ENCODE measurements at regions of chr18 and their contacts with region 1.

Region 1: DNA sequence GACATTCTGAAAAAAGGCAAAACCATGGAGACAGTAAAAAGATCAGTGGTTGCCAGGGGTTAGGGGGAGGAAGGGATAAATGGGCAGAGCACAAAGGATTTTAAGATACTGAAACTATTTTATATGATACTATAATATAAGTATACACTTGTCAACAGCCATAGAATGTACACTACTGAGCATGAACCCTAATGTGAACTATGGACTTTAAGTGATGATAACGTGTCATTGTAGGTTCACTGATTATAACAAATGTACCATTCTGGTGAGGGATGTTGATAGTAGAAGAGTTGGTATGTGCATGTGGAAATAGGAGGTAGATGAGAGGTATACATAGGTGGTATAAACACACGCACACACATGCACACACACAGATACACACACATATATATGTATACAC is 241.6 kb downstream of the NOL4 start:
- DNase-seq: no peak
- H3K4me3 ChIP-seq: no peak overlapping the region
- H3K27ac ChIP-seq: no peak overlapping the region
- H3K4me1 ChIP-seq: no peaks in the 10 kb centered on the region
- H3K27me3 ChIP-seq: no peaks in the 10 kb centered on the region
- CTCF ChIP-seq: no peak
- EP300 ChIP-seq: no peak
- POLR2A ChIP-seq: no peak

Region 2: DNA sequence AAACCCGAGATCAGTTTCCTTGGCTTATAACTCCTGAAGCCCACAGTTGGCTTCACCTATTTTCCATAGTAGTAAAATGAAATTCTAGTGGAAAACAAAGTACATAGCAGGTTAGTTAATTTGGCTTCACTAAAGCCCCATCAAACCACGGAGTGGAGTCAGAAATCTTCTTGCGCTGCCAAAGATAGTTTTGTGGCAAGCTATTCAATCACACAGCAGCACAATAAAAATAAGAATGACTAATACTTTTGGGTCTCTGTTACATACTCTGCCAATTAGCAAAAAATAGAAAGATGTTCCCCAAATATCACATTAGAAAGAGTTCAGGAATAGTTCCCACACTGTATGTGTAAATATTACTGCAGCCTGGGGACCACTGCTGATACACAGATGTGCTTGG is 416.8 kb after region 1 on chr18:
- intact Hi-C with region 1: loop called in 1 of 4 experiments (anchors 5 kb)
- DNase-seq: no peak
- H3K4me3 ChIP-seq: no peak overlapping the region
- H3K27ac ChIP-seq: no peak overlapping the region
- H3K4me1 ChIP-seq: no peaks in the 10 kb centered on the region
- H3K27me3 ChIP-seq: no peaks in the 10 kb centered on the region
- CTCF ChIP-seq: no peak
- EP300 ChIP-seq: no peak
- POLR2A ChIP-seq: no peak